Activated naive CD4-positive, alpha-beta T cell treated with anti-CD3 and anti-CD28 coated beads for 36 hours (primary cell): ENCODE measurements at regions of chr2 and their contacts with region 1.

Region 1: DNA sequence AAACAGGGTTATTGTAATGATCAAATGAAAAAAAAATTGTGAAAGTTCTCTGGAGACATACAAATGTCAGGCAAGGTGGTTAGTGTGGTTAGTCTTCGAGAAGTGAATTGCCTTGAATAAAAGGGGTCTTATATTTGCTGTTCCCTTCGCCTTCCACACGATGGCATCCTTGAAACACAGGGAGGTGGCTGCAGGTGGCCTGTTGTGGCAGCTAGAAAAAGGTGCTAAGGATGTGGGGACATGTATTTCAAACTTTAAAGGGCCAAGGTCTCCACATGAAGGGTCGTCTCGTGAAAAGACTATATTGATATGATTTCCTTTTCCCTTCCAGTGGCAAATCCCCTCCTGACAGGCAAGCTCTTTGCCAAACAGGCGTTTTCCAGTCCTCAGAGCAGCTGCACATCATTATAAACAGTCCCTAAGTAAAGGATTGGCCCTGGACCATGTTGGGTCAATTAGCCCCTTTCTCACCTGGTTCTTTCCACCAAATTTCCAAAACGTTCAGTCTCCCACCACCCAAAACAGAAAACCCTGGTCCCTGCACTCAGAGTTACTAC is 68.5 kb downstream of the COPS8 start:
- DNase-seq: peak; percentile 72
- H3K4me3 Mint-ChIP-seq: no peak overlapping the region
- H3K27ac Mint-ChIP-seq: no peak overlapping the region
- H3K4me1 Mint-ChIP-seq: peaks cover 29% of the 10 kb centered on the region
- H3K27me3 Mint-ChIP-seq: no peaks in the 10 kb centered on the region

Region 2: GRCh38 chr2:236803621-236804020 is 350.5 kb before region 1 on chr2:
- CTCF ChIA-PET with region 1: no interaction called
- intact Hi-C with region 1: no loop called
- DNase-seq: no peak
- H3K4me3 Mint-ChIP-seq: no peak overlapping the region
- H3K27ac Mint-ChIP-seq: no peak overlapping the region
- H3K4me1 Mint-ChIP-seq: no peaks in the 10 kb centered on the region
- H3K27me3 Mint-ChIP-seq: peaks cover 15% of the 10 kb centered on the region

Region 3: GRCh38 chr2:237128026-237128703 is 26.0 kb before region 1 on chr2:
- CTCF ChIA-PET with region 1: interaction called, 6 read pairs
- intact Hi-C with region 1: loop called (anchors 1 kb)
- DNase-seq: peak; percentile 86
- H3K4me3 Mint-ChIP-seq: no peak overlapping the region
- H3K27ac Mint-ChIP-seq: no peak overlapping the region
- H3K4me1 Mint-ChIP-seq: no peaks in the 10 kb centered on the region
- H3K27me3 Mint-ChIP-seq: no peaks in the 10 kb centered on the region

Region 4: DNA sequence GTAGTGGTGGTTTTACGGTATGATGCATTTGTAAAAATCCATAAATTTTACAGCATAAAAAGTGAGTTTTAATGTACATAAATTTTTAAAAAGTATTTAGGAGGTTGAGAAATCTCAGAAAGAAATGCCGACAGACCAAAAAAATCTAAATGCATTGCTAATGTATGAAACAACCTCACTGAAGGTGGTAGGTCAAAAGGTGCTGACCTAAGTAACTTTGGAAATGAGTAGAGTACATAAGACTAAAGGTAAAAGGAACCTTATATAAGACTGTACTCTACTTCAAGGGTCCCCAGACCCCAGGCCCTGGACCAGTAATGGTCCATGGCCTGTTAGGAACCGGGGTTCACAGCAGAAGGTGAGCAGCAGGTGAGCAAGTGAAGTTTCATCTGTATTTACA is 96.4 kb after region 1 on chr2:
- CTCF ChIA-PET with region 1: no interaction called
- intact Hi-C with region 1: no loop called
- DNase-seq: no peak
- H3K4me3 Mint-ChIP-seq: no peak overlapping the region
- H3K27ac Mint-ChIP-seq: no peak overlapping the region
- H3K4me1 Mint-ChIP-seq: no peaks in the 10 kb centered on the region
- H3K27me3 Mint-ChIP-seq: no peaks in the 10 kb centered on the region

Region 5: DNA sequence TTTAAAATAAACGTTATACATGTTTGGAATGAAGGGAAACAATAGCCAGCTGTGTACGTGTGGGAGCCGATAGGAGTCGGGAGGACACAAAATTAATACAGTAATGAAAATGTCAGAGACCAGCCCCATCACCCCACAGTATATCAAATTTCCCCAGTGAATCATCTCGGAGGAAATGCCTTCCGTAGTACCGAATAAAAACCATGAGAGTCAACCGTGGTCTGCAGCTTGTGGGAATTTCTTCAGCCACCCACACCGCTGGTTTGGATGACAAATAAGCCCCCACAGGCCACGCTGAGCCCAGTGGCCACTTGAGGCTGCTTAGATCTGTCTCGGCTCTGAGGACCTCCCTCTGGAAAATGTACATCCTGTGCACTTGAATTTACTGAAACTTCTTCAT is 126.1 kb after region 1 on chr2:
- CTCF ChIA-PET with region 1: no interaction called
- intact Hi-C with region 1: no loop called
- DNase-seq: no peak
- H3K4me3 Mint-ChIP-seq: no peak overlapping the region
- H3K27ac Mint-ChIP-seq: no peak overlapping the region
- H3K4me1 Mint-ChIP-seq: no peaks in the 10 kb centered on the region
- H3K27me3 Mint-ChIP-seq: peaks cover 7% of the 10 kb centered on the region

Region 6: GRCh38 chr2:237322564-237322963 is 168.4 kb after region 1 on chr2:
- CTCF ChIA-PET with region 1: interaction called, 3 read pairs
- intact Hi-C with region 1: loop called (anchors 1 kb)
- DNase-seq: peak; percentile 15
- H3K4me3 Mint-ChIP-seq: no peak overlapping the region
- H3K27ac Mint-ChIP-seq: no peak overlapping the region
- H3K4me1 Mint-ChIP-seq: no peaks in the 10 kb centered on the region
- H3K27me3 Mint-ChIP-seq: no peaks in the 10 kb centered on the region

Region 7: DNA sequence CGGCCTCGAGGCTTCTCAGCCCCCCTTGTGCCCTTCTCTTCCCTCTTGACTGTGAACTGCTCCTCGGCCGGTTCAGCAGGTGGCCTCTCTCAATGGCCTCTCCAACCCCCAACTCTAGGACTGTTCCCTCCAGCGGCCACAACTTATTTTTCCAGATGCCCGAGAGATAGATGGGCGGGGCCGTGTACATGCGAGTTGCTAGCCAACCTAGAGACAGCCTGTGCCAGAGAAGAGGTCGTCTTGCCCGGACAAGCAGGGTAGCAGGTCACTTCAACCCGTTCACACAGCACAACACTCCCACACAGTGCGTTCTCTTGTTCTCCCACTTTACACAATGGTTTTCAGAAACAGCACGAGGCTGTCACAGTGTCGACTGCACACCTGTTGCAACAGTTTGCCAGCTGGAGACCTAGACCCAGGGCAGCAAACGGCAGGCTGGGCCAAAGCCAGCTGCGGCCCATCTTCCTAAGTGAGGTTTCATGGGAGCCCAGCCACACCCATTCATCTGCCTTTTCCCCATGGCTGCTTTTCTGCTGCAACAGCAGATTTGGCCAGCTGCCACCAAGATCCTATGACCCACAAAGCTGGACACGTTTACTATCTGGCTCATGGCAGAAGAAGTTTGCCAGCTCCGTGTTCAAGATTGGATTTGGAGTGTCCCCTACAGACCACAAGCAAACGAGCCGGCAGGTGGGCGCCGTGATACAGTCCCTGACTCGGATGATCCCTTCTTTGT is 404.9 kb after region 1 on chr2:
- CTCF ChIA-PET with region 1: no interaction called
- intact Hi-C with region 1: loop called (anchors 5 kb)
- DNase-seq: no peak
- H3K4me3 Mint-ChIP-seq: no peak overlapping the region
- H3K27ac Mint-ChIP-seq: no peak overlapping the region
- H3K4me1 Mint-ChIP-seq: peaks cover 13% of the 10 kb centered on the region
- H3K27me3 Mint-ChIP-seq: peaks cover 7% of the 10 kb centered on the region